Calu3 (cell line): ENCODE measurements at regions of chr12 and their contacts with region 1.

Region 1: GRCh38 chr12:132651444-132652100 is 33.0 kb downstream of the P2RX2 start:
- DNase-seq: no peak
- H3K4me3 Mint-ChIP-seq: no peak overlapping the region
- H3K27ac Mint-ChIP-seq: no peak overlapping the region
- H3K4me1 Mint-ChIP-seq: no peaks in the 10 kb centered on the region
- H3K27me3 Mint-ChIP-seq: no peaks in the 10 kb centered on the region
- CTCF ChIP-seq: no peak

Region 2: GRCh38 chr12:132698341-132698740 is 46.8 kb after region 1 on chr12:
- CTCF ChIA-PET with region 1: interaction called, 10 read pairs
- intact Hi-C with region 1: no loop called
- DNase-seq: no peak
- H3K4me3 Mint-ChIP-seq: no peak overlapping the region
- H3K27ac Mint-ChIP-seq: no peak overlapping the region
- H3K4me1 Mint-ChIP-seq: peaks cover 7% of the 10 kb centered on the region
- H3K27me3 Mint-ChIP-seq: no peaks in the 10 kb centered on the region
- CTCF ChIP-seq: no peak